Colonic mucosa (tissue), 4 donors: ENCODE measurements at regions of chr12 and their contacts with region 1.

Region 1: DNA sequence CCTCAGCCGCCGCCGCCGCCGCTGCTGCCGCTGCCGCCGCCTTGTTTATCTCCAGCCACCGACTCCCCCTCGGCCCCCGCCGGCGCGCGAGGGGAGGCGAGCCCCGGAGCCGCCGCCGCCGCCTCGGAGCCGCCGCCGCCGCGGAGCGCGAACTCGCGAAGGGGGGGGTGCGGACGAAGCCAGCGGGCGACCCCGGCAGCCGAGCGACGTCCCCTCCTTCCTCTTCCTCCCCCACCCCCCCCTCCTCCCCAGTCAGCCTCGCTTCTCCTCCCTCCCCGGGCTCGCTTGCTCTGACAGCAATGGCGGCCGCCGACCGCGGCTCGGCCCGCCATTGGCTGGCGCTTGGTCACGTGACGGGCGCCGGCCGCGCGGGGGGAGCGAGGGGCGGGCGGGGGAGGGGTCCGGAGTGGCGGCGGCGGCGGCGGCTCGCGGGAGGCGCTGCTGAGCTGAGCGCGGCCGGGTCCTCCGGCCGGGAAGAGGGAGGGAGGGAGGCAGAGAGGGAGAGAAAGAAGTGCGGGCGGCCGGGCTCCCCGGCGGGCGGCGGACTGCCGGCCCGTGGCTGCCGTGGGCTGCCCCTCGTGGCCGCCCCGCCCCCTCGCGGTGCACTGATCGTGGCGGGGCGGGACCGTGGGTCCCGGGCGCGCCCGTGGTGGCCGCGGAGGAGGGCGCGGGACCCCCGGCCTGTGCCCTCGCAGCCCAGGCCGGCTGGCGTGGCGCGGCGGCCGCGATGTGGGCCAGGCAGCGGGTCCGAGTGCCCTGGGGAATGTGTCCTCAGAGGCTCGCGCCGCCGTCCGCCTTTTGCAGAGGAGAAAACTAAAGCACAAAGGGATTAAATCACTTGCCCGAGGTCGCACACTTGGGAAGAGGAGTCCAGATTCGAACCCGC is at the start of gene MED13L:
- DNase-seq: peak; percentile 84
- H3K4me3 ChIP-seq: peak within 1 kb of the TSS; percentile 60
- H3K27ac ChIP-seq: peak within 1 kb of the TSS; percentile 87
- H3K4me1 ChIP-seq: peaks cover 6% of the 10 kb centered on the region
- H3K27me3 ChIP-seq: no peaks in the 10 kb centered on the region
- CTCF ChIP-seq: no peak
- total RNA-seq, gene MED13L: 73.8 to 92.6 TPM

Region 2: DNA sequence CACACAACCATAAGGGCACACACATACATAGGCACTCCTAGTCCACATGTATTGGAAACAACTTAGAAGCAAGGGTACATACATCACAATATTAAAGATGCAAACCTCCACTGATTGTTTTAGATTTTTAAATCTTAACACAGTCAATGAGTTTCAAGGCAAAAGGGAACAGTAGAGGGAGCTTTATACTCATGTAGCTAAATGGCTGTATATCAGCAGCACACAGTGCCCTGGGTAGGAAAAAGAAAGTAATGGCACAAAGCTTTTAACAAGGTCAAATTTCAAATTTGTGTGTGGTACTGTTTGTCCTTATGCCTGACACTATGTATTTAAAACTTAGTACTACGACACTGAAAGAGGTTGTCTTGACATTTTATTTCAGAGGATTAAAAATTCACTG is 262.1 kb before region 1 on chr12:
- intact Hi-C with region 1: loop called (anchors 10 kb)
- DNase-seq: no peak
- H3K4me3 ChIP-seq: no peak overlapping the region
- H3K27ac ChIP-seq: no peak overlapping the region
- H3K4me1 ChIP-seq: no peaks in the 10 kb centered on the region
- H3K27me3 ChIP-seq: no peaks in the 10 kb centered on the region
- CTCF ChIP-seq: peak; percentile 29

Region 3: GRCh38 chr12:116599285-116600136 is 321.9 kb after region 1 on chr12:
- intact Hi-C with region 1: loop called (anchors 5 kb)
- DNase-seq: peak; percentile 89
- H3K4me3 ChIP-seq: peak overlapping the region; percentile 26
- H3K27ac ChIP-seq: no peak overlapping the region
- H3K4me1 ChIP-seq: no peaks in the 10 kb centered on the region
- H3K27me3 ChIP-seq: no peaks in the 10 kb centered on the region
- CTCF ChIP-seq: peak; percentile 67